K562 (cell line): ENCODE measurements at regions of chr14 and their contacts with region 1.

Region 1: DNA sequence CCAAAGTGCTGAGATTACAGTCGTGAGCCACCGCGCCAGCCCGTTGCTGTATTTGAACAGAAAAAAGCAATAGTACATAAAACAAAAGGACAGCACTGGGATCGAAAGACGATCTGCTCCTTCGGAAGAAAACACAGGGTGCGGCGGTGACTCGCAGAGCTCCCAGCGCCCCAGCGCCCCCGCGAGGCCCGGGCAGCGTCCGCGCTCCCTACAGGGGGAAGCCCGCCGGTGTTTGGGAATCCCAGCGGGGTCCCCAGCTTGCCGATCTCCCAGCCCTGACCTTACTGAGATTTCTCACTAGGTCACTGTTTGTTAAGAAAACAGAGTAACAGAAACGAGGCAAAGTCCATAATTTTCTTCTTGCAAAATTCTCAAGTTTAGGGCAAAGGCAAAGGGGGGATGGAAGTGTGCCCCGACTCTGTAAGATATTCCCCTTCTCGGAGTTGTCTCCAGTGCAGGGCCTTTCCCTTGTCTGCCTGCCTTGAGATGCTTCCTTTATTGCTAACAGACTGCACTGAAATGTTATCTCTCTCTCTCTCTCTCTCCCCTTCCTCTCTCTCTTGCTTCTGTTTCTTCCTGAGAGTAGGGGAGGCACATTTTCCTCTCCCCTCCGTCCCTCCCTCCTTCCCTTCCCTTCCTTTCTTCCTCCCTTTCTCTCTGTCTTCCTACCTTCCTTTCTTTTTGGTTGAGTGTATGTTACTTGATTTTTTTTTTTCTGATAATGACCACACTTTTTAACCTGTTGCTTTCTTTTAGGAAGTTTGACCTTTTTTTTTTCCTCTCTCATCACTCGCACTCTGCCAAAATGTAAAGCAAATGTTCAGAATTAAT is 91.9 kb downstream of the TMEM30B start:
- DNase-seq: peak; percentile 12 to 49 (median 22)
- ATAC-seq: peak; percentile 96
- H3K4me3 ChIP-seq: 0 out of 2 replicates have a peak overlapping the region, but pooled peaks have one; percentile 18
- H3K27ac ChIP-seq: no peak overlapping the region
- H3K4me1 ChIP-seq: peaks cover 0 to 9% of the 10 kb centered on the region in 2 experiments; a peak in 2 of 5 replicates
- H3K27me3 ChIP-seq: peaks cover 13 to 20% of the 10 kb centered on the region in 2 experiments; a peak in 4 of 5 replicates
- CTCF ChIP-seq: peak; percentile 47 to 73 (median 55); a peak in 5 of 6 replicates
- EP300 ChIP-seq: no peak
- POLR2A ChIP-seq: no peak
- RAD21 ChIP-seq: peak in 1 of 2 experiments; percentile 64; a peak in 2 of 4 replicates

Region 2: GRCh38 chr14:61034416-61035120 is 154.6 kb before region 1 on chr14:
- CTCF ChIA-PET with region 1: no interaction called
- POLR2A ChIA-PET with region 1: no interaction called
- in situ Hi-C with region 1: no loop called
- intact Hi-C with region 1: loop called (anchors 10 kb)
- DNase-seq: no peak
- ATAC-seq: no peak
- H3K4me3 ChIP-seq: no peak overlapping the region
- H3K27ac ChIP-seq: no peak overlapping the region
- H3K4me1 ChIP-seq: no peaks in the 10 kb centered on the region
- H3K27me3 ChIP-seq: no peaks in the 10 kb centered on the region
- CTCF ChIP-seq: no peak
- EP300 ChIP-seq: no peak
- POLR2A ChIP-seq: no peak
- RAD21 ChIP-seq: no peak

Region 3: DNA sequence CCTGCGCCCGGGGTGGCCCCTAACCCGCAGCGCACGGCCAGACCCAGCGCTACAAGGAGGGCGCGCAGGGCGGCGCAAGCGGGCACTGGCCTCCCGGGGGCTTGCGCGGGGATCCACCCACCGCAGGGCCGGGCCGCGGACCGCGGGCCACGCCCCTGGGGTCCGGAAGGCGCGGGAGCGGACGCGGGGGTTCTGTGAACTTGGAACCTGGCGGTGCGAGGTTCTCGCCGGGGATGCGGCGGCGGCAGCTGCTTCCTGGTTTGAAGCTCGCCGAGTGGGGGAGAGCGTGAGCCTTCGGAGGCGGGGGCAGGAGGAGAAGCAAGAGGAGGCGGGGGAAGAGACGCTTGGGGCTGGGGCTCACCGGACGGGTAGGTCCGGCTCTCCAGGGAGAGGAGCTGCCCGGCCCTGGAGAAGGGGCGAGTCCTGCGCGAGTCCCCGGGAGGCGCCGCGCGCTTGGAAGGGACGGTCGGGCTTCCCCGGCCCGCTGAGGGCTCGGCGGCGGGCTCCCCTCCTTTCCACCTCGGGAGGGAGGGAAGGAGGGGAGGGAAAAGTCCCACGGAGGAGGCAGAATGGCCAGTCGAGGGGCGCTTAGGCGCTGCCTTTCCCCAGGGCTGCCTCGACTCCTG is 132.3 kb after region 1 on chr14 and contains the start of gene PRKCH:
- CTCF ChIA-PET with region 1: no interaction called
- POLR2A ChIA-PET with region 1: no interaction called
- in situ Hi-C with region 1: no loop called
- intact Hi-C with region 1: no loop called
- DNase-seq: peak; percentile 63 to 74 (median 66)
- ATAC-seq: peak; percentile 90
- H3K4me3 ChIP-seq: peak within 1 kb of the TSS; percentile 49
- H3K27ac ChIP-seq: peak within 1 kb of the TSS; percentile 41; the same call in 2 of the 3 replicates
- H3K4me1 ChIP-seq: peaks cover 0 to 19% of the 10 kb centered on the region in 2 experiments; a peak in 3 of 5 replicates
- H3K27me3 ChIP-seq: no peaks in the 10 kb centered on the region
- CTCF ChIP-seq: peak in 2 of 3 experiments; percentile 16 to 29; a peak in 2 of 6 replicates
- EP300 ChIP-seq: no peak
- POLR2A ChIP-seq: no peak
- RAD21 ChIP-seq: peak in 1 of 2 experiments; percentile 30; a peak in 2 of 4 replicates
- polyA plus RNA-seq, gene PRKCH: 0.61 to 1.1 TPM